Heart left ventricle (tissue), 16 donors: ENCODE measurements at regions of chr18 and their contacts with region 1.

Region 1: DNA sequence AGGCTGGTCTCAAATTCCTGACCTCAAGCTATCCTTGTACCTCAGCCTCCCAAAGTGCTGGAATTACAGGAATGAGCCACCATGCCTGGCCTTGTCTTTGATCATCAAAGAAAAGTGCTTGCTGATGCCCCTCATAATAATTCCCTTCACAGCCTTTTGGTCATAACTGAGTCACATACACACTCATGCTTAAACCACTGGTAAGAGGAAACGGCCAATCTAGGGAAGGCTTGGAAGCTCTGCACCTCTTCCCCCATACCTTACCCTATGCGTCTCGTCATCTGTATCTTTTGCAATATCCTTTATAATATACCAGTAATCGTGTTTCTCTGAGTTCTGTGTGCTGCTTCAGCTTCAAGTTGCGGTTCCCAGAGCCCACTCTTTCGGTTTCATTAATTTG is 4.8 kb upstream of the RNF138 start:
- DNase-seq: no peak
- ATAC-seq: no peak
- H3K4me3 ChIP-seq: no peak overlapping the region
- H3K27ac ChIP-seq: peak overlapping the region in 1 of 12 donors; percentile 94
- H3K4me1 ChIP-seq: peaks cover 0 to 50% (median 18%) of the 10 kb centered on the region in 12 donors
- H3K27me3 ChIP-seq: no peaks in the 10 kb centered on the region
- CTCF ChIP-seq: no peak
- POLR2A ChIP-seq: no peak

Region 2: GRCh38 chr18:31783059-31783458 is 303.8 kb before region 1 on chr18:
- intact Hi-C with region 1: no loop called
- DNase-seq: no peak
- ATAC-seq: no peak
- H3K4me3 ChIP-seq: no peak overlapping the region
- H3K27ac ChIP-seq: no peak overlapping the region
- H3K4me1 ChIP-seq: no peaks in the 10 kb centered on the region
- H3K27me3 ChIP-seq: no peaks in the 10 kb centered on the region
- CTCF ChIP-seq: no peak
- POLR2A ChIP-seq: no peak

Region 3: GRCh38 chr18:31942999-31943865 is 143.6 kb before region 1 on chr18 and contains the start of gene TRAPPC8:
- intact Hi-C with region 1: loop called in 7 of 10 experiments (anchors 2 to 10 kb)
- DNase-seq: peak; percentile 98 to 99 (median 98)
- ATAC-seq: peak; percentile 99
- H3K4me3 ChIP-seq: peak within 1 kb of the TSS; percentile 70 to 97 (median 86)
- H3K27ac ChIP-seq: peak within 1 kb of the TSS; percentile 80 to 95 (median 92)
- H3K4me1 ChIP-seq: peaks cover 3 to 45% (median 30%) of the 10 kb centered on the region in 12 donors
- H3K27me3 ChIP-seq: no peaks in the 10 kb centered on the region
- CTCF ChIP-seq: peak in 3 of 12 donors; percentile 28 to 39 (median 37)
- POLR2A ChIP-seq: no peak
- total RNA-seq, gene TRAPPC8: 25.5 to 41.9 (median 31.0) TPM

Region 4: GRCh38 chr18:31983020-31983419 is 103.8 kb before region 1 on chr18:
- intact Hi-C with region 1: loop called in 1 of 10 experiments (anchors 2 kb)
- DNase-seq: peak in 3 of 5 donors; percentile 19 to 49 (median 39)
- ATAC-seq: peak; percentile 86 to 89 (median 88)
- H3K4me3 ChIP-seq: no peak overlapping the region
- H3K27ac ChIP-seq: peak overlapping the region in 10 of 12 donors; percentile 1 to 70 (median 32)
- H3K4me1 ChIP-seq: peaks cover 0 to 18% (median 9%) of the 10 kb centered on the region in 12 donors
- H3K27me3 ChIP-seq: no peaks in the 10 kb centered on the region
- CTCF ChIP-seq: no peak
- POLR2A ChIP-seq: no peak

Region 5: GRCh38 chr18:32048507-32049091 is 38.3 kb before region 1 on chr18:
- intact Hi-C with region 1: loop called in 1 of 10 experiments (anchors 2 kb)
- DNase-seq: peak in 4 of 5 donors; percentile 42 to 58 (median 52)
- ATAC-seq: peak; percentile 64 to 92 (median 88)
- H3K4me3 ChIP-seq: no peak overlapping the region
- H3K27ac ChIP-seq: peak overlapping the region in 9 of 12 donors; percentile 10 to 92 (median 55)
- H3K4me1 ChIP-seq: peaks cover 0 to 39% (median 11%) of the 10 kb centered on the region in 12 donors
- H3K27me3 ChIP-seq: no peaks in the 10 kb centered on the region
- CTCF ChIP-seq: no peak
- POLR2A ChIP-seq: no peak